Mammary epithelial cell (primary cell): ENCODE measurements at regions of chr18 and their contacts with region 1.

Region 1: DNA sequence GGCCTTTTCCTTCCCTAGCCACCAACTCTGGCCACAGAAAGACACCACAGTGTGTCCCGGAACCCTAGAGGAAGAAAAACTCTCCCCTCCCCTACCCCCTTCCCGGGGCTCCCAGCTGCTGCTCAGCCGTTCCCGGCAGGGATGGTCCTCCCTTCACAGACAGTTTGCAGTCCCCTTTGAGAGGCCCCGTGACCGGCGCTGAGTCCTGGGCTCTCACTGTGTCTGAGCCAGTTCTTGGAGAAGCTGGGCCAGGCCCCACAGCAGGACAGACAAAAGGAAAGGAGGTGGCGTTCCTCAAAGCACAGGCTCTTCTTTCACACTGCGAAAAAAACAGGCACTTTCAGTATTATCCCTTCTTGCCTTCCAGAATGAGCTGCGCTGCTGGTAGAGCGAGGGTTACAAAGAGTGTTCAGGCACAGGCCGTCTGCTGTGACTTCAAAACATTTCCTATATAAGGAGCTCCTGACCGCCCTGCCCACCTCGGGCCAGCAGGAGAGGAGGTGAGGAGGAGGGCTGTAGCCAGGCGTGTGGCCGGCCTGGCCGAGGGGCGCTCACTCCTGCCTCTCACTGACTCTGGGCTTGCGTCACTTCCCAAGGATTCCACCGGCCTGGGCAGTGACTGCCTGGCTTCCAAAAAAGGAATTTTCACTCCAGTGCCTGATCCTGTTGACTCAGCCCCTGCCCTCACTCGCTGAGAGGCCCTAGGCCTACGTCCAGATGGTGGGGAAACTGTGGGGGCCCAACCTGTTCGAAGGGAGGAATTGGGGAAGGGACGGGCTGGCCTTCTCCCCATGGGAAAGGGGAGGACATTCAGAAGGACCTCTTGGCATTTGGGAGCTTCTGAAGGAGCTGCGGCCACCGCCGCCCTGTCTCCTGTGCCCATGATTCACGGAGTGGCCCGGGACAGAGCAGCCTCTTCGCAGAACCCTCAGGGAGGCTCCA is 24.9 kb downstream of the CIDEA start:
- DNase-seq: peak; percentile 87
- H3K4me3 ChIP-seq: peak overlapping the region; percentile 7 to 28 (median 18)
- H3K27ac ChIP-seq: peak overlapping the region; percentile 83
- H3K4me1 ChIP-seq: peaks cover 43% of the 10 kb centered on the region
- H3K27me3 ChIP-seq: no peaks in the 10 kb centered on the region
- CTCF ChIP-seq: no peak

Region 2: GRCh38 chr18:12327510-12328178 is 48.6 kb after region 1 on chr18:
- CTCF ChIA-PET with region 1: interaction called, 3 read pairs
- dilution Hi-C with region 1: no loop called
- in situ Hi-C with region 1: no loop called
- intact Hi-C with region 1: loop called (anchors 1 kb)
- DNase-seq: peak; percentile 76
- H3K4me3 ChIP-seq: no peak overlapping the region
- H3K27ac ChIP-seq: no peak overlapping the region
- H3K4me1 ChIP-seq: no peaks in the 10 kb centered on the region
- H3K27me3 ChIP-seq: no peaks in the 10 kb centered on the region
- CTCF ChIP-seq: peak; percentile 94 to 98